CD8-positive, alpha-beta T cell (primary cell): ENCODE measurements at regions of chr12 and their contacts with region 1.

Region 1: GRCh38 chr12:12837025-12837872 is 24.1 kb downstream of the DDX47 start:
- DNase-seq: peak in 5 of 9 experiments; percentile 7 to 62 (median 25)
- ATAC-seq: peak; percentile 84
- H3K4me3 ChIP-seq: no peak overlapping the region
- H3K4me3 Mint-ChIP-seq: no peak overlapping the region
- H3K27ac ChIP-seq: no peak overlapping the region
- H3K27ac Mint-ChIP-seq: no peak overlapping the region
- H3K4me1 ChIP-seq: no peaks in the 10 kb centered on the region
- H3K4me1 Mint-ChIP-seq: peaks cover 23% of the 10 kb centered on the region
- H3K27me3 ChIP-seq: no peaks in the 10 kb centered on the region
- H3K27me3 Mint-ChIP-seq: no peaks in the 10 kb centered on the region
- CTCF ChIP-seq: peak; percentile 66

Region 2: DNA sequence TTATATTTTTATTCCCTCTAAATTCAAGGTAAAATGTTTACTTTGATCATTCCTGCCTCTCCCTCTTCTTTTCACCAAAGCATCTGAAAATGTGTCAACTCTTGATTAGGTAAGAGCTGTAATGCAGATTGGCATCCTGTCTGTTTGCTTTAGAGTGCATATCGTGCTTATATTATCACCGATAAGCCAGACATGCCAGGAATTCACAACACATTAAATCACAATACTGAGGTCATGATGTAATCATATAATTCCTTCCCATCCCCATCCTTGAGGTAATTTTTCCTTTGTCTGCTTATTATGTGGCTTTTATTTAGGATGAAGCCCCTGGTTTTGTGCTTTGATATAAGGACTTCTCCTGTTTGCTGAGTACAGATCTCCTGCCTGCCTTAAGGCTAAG is 14.0 kb before region 1 on chr12:
- CTCF ChIA-PET with region 1: interaction called, 14 read pairs
- POLR2A ChIA-PET with region 1: no interaction called
- intact Hi-C with region 1: no loop called
- DNase-seq: no peak
- ATAC-seq: no peak
- H3K4me3 ChIP-seq: no peak overlapping the region
- H3K4me3 Mint-ChIP-seq: no peak overlapping the region
- H3K27ac ChIP-seq: no peak overlapping the region
- H3K27ac Mint-ChIP-seq: no peak overlapping the region
- H3K4me1 ChIP-seq: no peaks in the 10 kb centered on the region
- H3K4me1 Mint-ChIP-seq: peaks cover 20% of the 10 kb centered on the region
- H3K27me3 ChIP-seq: no peaks in the 10 kb centered on the region
- H3K27me3 Mint-ChIP-seq: no peaks in the 10 kb centered on the region
- CTCF ChIP-seq: no peak

Region 3: DNA sequence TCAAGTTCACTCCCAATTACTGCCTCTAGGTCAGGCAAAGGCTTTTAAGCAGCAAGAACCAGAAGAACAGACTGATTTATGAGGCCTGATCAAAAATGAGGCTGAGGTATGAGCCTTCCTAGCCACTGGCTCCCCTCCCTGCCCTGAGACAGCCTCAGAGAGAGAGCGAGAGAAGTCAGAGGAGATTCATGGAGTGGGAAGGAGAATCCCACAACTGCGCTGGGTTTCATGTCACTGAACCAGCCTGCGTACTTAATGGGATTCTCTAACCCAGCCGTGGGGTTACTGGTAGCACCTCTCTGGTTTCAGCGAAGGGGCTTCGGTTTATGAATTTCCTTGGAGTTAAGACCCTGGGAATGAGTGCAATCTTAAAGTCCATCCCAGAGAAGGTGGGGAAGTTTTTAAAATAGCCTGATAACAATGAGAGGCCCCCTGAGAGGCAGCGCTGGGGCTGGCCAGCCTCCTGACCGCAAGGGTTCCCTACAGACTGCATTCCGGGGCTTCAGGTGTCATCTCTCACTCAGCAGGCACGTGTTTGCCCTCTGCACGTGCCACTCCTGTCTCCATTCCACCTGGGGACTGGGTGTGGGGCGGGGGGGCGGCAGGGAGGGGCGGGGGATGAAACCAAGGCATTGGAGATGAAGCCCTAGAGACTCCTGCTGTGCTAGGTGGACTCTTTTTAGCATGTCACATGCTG is 48.0 kb after region 1 on chr12:
- CTCF ChIA-PET with region 1: interaction called, 4 read pairs
- POLR2A ChIA-PET with region 1: no interaction called
- intact Hi-C with region 1: loop called (anchors 1 to 5 kb)
- DNase-seq: no peak
- ATAC-seq: no peak
- H3K4me3 ChIP-seq: no peak overlapping the region
- H3K4me3 Mint-ChIP-seq: no peak overlapping the region
- H3K27ac ChIP-seq: no peak overlapping the region
- H3K27ac Mint-ChIP-seq: no peak overlapping the region
- H3K4me1 ChIP-seq: no peaks in the 10 kb centered on the region
- H3K4me1 Mint-ChIP-seq: peaks cover 3% of the 10 kb centered on the region
- H3K27me3 ChIP-seq: no peaks in the 10 kb centered on the region
- H3K27me3 Mint-ChIP-seq: peaks cover 22% of the 10 kb centered on the region
- CTCF ChIP-seq: no peak

Region 4: GRCh38 chr12:12890815-12891645 is 53.8 kb after region 1 on chr12 and contains the start of gene GPRC5A:
- CTCF ChIA-PET with region 1: interaction called, 3 read pairs
- POLR2A ChIA-PET with region 1: no interaction called
- intact Hi-C with region 1: loop called (anchors 1 to 5 kb)
- DNase-seq: peak in 5 of 9 experiments; percentile 18 to 53 (median 27)
- ATAC-seq: peak; percentile 64
- H3K4me3 ChIP-seq: peak within 1 kb of the TSS; percentile 38 to 56
- H3K4me3 Mint-ChIP-seq: peak within 1 kb of the TSS; percentile 86
- H3K27ac ChIP-seq: no peak within 1 kb of the TSS
- H3K27ac Mint-ChIP-seq: no peak within 1 kb of the TSS
- H3K4me1 ChIP-seq: peaks cover 5% of the 10 kb centered on the region
- H3K4me1 Mint-ChIP-seq: peaks cover 10% of the 10 kb centered on the region
- H3K27me3 ChIP-seq: no peaks in the 10 kb centered on the region
- H3K27me3 Mint-ChIP-seq: peaks cover 45% of the 10 kb centered on the region
- CTCF ChIP-seq: no peak
- total RNA-seq, gene GPRC5A: not detected

Region 5: GRCh38 chr12:12983420-12984035 is 146.3 kb after region 1 on chr12:
- CTCF ChIA-PET with region 1: no interaction called
- POLR2A ChIA-PET with region 1: no interaction called
- intact Hi-C with region 1: loop called (anchors 1 to 2 kb)
- DNase-seq: peak in 1 of 9 experiments; percentile 25
- ATAC-seq: no peak
- H3K4me3 ChIP-seq: no peak overlapping the region
- H3K4me3 Mint-ChIP-seq: no peak overlapping the region
- H3K27ac ChIP-seq: no peak overlapping the region
- H3K27ac Mint-ChIP-seq: no peak overlapping the region
- H3K4me1 ChIP-seq: no peaks in the 10 kb centered on the region
- H3K4me1 Mint-ChIP-seq: no peaks in the 10 kb centered on the region
- H3K27me3 ChIP-seq: no peaks in the 10 kb centered on the region
- H3K27me3 Mint-ChIP-seq: no peaks in the 10 kb centered on the region
- CTCF ChIP-seq: no peak